ENCODE measurements at regions of chrX and their contacts with region 1.

Region 1: GRCh38 chrX:9708904-9709553 is 56.6 kb downstream of the GPR143 start:
- DNase-seq: peak; percentile 86
- ATAC-seq: peak; percentile 89
- H3K4me3 ChIP-seq: no peak overlapping the region
- H3K4me3 Mint-ChIP-seq: peak overlapping the region; percentile 29
- H3K27ac ChIP-seq: no peak overlapping the region
- H3K27ac Mint-ChIP-seq: no peak overlapping the region
- H3K4me1 ChIP-seq: peaks cover 7 to 10% of the 10 kb centered on the region in 2 donors
- H3K4me1 Mint-ChIP-seq: peaks cover 12% of the 10 kb centered on the region
- H3K27me3 ChIP-seq: no peaks in the 10 kb centered on the region
- H3K27me3 Mint-ChIP-seq: no peaks in the 10 kb centered on the region
- CTCF ChIP-seq: peak; percentile 70

Region 2: GRCh38 chrX:8743126-8743732 is 965.8 kb before region 1 on chrX:
- CTCF ChIA-PET with region 1: no interaction called
- POLR2A ChIA-PET with region 1: no interaction called
- intact Hi-C with region 1: loop called (anchors 1 kb)
- DNase-seq: peak; percentile 56
- ATAC-seq: no peak
- H3K4me3 ChIP-seq: no peak overlapping the region
- H3K4me3 Mint-ChIP-seq: no peak overlapping the region
- H3K27ac ChIP-seq: no peak overlapping the region
- H3K27ac Mint-ChIP-seq: no peak overlapping the region
- H3K4me1 ChIP-seq: no peaks in the 10 kb centered on the region
- H3K4me1 Mint-ChIP-seq: no peaks in the 10 kb centered on the region
- H3K27me3 ChIP-seq: peaks cover 0 to 2% (median 0%) of the 10 kb centered on the region in 4 experiments
- H3K27me3 Mint-ChIP-seq: peaks cover 3% of the 10 kb centered on the region
- CTCF ChIP-seq: peak; percentile 66

Region 3: DNA sequence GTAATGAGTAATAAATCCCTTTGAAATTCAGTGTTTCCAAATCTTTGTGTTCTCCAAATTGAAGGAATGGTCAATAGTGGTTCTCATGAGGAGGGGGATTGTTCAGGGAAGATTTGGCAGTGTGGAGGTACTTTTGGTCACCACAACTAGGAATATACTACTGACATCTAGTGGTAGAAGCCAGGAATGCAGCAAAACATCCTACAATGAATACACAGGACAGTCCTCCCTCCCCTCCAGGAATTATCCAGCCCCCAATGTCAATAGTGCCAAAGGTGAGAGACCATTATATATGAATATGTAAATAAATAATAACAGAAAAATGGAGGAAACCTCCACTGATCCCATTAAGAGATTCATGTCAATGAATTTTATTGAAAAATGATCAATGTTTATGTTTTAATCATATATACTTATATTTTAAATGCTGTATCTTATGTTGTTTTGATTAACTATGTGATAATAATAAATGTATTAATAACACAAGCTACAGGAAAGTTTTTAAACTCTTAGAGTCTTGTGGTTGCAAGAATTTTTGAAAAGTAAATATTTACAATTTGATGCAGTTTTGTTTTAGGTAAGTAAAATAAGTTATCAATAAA is 893.5 kb before region 1 on chrX:
- CTCF ChIA-PET with region 1: interaction called, 6 read pairs
- POLR2A ChIA-PET with region 1: no interaction called
- intact Hi-C with region 1: loop called (anchors 1 kb)
- DNase-seq: peak; percentile 47
- ATAC-seq: no peak
- H3K4me3 ChIP-seq: no peak overlapping the region
- H3K4me3 Mint-ChIP-seq: no peak overlapping the region
- H3K27ac ChIP-seq: no peak overlapping the region
- H3K27ac Mint-ChIP-seq: no peak overlapping the region
- H3K4me1 ChIP-seq: no peaks in the 10 kb centered on the region
- H3K4me1 Mint-ChIP-seq: no peaks in the 10 kb centered on the region
- H3K27me3 ChIP-seq: no peaks in the 10 kb centered on the region
- H3K27me3 Mint-ChIP-seq: peaks cover 8% of the 10 kb centered on the region
- CTCF ChIP-seq: peak; percentile 78

Region 4: DNA sequence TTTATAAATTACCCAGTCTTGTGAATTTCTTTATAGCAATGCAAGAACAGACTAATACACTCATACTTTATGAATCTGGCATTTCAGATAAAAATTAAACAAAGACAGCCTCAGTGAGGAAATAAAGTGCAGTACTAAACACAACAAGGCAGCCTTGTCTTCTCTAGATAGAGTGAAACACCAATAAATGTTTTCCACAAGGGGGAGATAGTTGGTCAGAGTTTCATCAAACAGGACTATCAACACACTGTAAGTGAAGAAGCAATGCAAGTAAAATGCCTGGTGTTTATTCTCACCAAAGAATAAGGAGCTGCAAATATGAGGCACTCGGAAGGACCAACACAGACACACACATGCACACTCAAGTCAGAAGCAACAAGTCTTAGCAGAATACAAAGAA is 737.9 kb before region 1 on chrX:
- CTCF ChIA-PET with region 1: interaction called, 4 read pairs
- POLR2A ChIA-PET with region 1: no interaction called
- intact Hi-C with region 1: loop called (anchors 1 kb)
- DNase-seq: peak; percentile 53
- ATAC-seq: peak; percentile 47
- H3K4me3 ChIP-seq: no peak overlapping the region
- H3K4me3 Mint-ChIP-seq: no peak overlapping the region
- H3K27ac ChIP-seq: no peak overlapping the region
- H3K27ac Mint-ChIP-seq: no peak overlapping the region
- H3K4me1 ChIP-seq: no peaks in the 10 kb centered on the region
- H3K4me1 Mint-ChIP-seq: no peaks in the 10 kb centered on the region
- H3K27me3 ChIP-seq: peaks cover 0 to 2% (median 0%) of the 10 kb centered on the region in 4 experiments
- H3K27me3 Mint-ChIP-seq: peaks cover 6% of the 10 kb centered on the region
- CTCF ChIP-seq: peak; percentile 35

Region 5: GRCh38 chrX:9677098-9677739 is 31.8 kb before region 1 on chrX:
- CTCF ChIA-PET with region 1: no interaction called
- POLR2A ChIA-PET with region 1: no interaction called
- intact Hi-C with region 1: loop called (anchors 1 kb)
- DNase-seq: peak; percentile 82
- ATAC-seq: peak; percentile 91
- H3K4me3 ChIP-seq: no peak overlapping the region
- H3K4me3 Mint-ChIP-seq: peak overlapping the region; percentile 77
- H3K27ac ChIP-seq: peak overlapping the region; percentile 69 to 81
- H3K27ac Mint-ChIP-seq: peak overlapping the region; percentile 92
- H3K4me1 ChIP-seq: peaks cover 24 to 38% of the 10 kb centered on the region in 2 donors
- H3K4me1 Mint-ChIP-seq: peaks cover 44% of the 10 kb centered on the region
- H3K27me3 ChIP-seq: no peaks in the 10 kb centered on the region
- H3K27me3 Mint-ChIP-seq: no peaks in the 10 kb centered on the region
- CTCF ChIP-seq: no peak